ENCODE measurements at regions of chr9 and their contacts with region 1.

Region 1: GRCh38 chr9:37408933-37409710 is 13.4 kb upstream of the GRHPR start:
- DNase-seq: peak; percentile 95
- H3K4me3 Mint-ChIP-seq: no peak overlapping the region
- H3K27ac Mint-ChIP-seq: peak overlapping the region; percentile 78
- H3K4me1 Mint-ChIP-seq: peaks cover 43% of the 10 kb centered on the region
- H3K27me3 Mint-ChIP-seq: peaks cover 6% of the 10 kb centered on the region

Region 2: DNA sequence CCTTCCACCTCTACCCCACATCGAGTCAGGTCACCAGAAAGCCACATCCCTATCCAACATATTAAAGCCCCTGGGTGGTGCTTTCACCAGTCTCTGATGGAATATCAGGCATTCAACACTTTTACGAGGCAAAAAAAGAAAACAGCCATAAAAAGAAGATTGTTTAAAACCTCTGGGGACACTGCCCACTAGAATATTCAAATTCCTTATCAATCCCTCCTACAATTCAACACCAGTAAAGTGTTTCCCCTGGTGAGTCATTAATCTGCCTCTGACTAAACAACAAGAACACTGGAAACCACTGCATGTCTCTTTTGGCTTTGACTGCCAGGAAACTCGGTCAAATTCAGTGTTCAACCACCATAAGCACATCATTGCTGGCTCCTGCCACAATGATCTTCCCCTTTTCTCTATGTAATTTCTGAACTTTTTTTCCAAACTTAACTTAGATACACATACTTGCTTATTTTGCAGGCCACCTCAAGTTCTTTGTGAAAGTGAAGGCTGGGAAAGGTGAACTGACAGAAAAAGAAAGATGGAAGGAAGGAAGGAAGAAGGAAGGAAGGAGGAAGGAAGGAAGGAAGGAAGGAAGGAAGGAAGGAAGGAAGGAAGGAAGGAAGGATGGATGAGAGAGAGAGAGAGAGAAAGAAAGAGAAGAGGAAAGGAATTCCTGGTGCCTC is 480.3 kb before region 1 on chr9:
- CTCF ChIA-PET with region 1: no interaction called
- POLR2A ChIA-PET with region 1: no interaction called
- intact Hi-C with region 1: loop called (anchors 2 kb)
- DNase-seq: peak; percentile 65
- H3K4me3 Mint-ChIP-seq: no peak overlapping the region
- H3K27ac Mint-ChIP-seq: peak overlapping the region; percentile 82
- H3K4me1 Mint-ChIP-seq: peaks cover 28% of the 10 kb centered on the region
- H3K27me3 Mint-ChIP-seq: peaks cover 10% of the 10 kb centered on the region

Region 3: DNA sequence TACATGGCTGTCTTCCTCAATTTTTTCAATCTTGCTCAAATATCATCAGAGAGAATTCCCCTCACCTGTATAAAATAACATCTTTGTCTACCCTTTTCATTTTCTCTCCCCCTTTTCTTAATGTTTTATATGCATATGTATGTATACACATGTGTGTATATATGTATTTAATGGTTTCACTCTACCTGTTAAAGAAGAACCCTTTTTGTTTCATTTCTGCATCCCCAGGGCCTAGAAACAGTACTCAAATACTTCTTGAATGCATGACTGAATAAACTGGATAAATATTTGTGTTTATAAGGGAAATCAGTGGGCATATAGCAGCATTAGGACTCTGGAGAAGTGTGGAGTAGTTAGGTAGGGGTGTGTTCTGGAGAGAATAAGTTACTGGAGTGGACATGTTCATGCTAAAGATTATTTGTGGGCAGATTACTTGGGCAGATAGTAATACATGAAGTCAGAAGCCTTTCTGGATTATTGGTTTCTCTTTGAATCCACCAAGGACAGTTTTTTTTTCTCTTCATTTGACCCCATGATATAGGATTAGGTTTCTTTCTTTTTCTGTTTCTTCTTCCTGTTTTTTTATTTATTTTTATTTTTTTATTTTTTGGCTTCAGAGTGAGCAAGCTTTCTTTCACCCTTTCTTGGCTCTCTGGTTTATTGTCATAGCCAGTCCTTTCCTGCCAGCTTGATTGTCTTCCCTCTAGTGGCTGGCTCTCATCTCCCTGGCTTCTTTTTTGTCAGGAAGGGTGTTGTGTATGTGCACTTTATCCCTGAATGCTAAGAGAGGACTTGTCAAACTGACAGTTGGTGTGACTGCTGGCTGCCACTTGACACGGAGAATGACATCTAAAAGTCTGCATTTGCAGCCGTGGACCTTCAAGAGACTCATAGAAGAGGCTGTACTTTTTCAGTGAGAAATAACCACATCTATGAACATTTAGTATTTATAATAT is 199.4 kb before region 1 on chr9:
- CTCF ChIA-PET with region 1: no interaction called
- POLR2A ChIA-PET with region 1: no interaction called
- intact Hi-C with region 1: loop called (anchors 10 kb)
- DNase-seq: no peak
- H3K4me3 Mint-ChIP-seq: no peak overlapping the region
- H3K27ac Mint-ChIP-seq: no peak overlapping the region
- H3K4me1 Mint-ChIP-seq: peaks cover 35% of the 10 kb centered on the region
- H3K27me3 Mint-ChIP-seq: no peaks in the 10 kb centered on the region

Region 4: GRCh38 chr9:37465249-37466036 is 56.3 kb after region 1 on chr9 and contains the start of gene ZBTB5:
- CTCF ChIA-PET with region 1: interaction called, 6 read pairs
- POLR2A ChIA-PET with region 1: interaction called, 4 read pairs
- intact Hi-C with region 1: loop called (anchors 1 kb)
- DNase-seq: peak; percentile 99
- H3K4me3 Mint-ChIP-seq: peak within 1 kb of the TSS; percentile 97
- H3K27ac Mint-ChIP-seq: peak within 1 kb of the TSS; percentile 95
- H3K4me1 Mint-ChIP-seq: peaks cover 29% of the 10 kb centered on the region
- H3K27me3 Mint-ChIP-seq: no peaks in the 10 kb centered on the region
- total RNA-seq, gene ZBTB5: 8.3 to 9.3 TPM

Region 5: GRCh38 chr9:37528652-37529510 is 119.8 kb after region 1 on chr9:
- CTCF ChIA-PET with region 1: no interaction called
- POLR2A ChIA-PET with region 1: no interaction called
- intact Hi-C with region 1: loop called (anchors 1 kb)
- DNase-seq: peak; percentile 93
- H3K4me3 Mint-ChIP-seq: peak overlapping the region; percentile 71
- H3K27ac Mint-ChIP-seq: peak overlapping the region; percentile 94
- H3K4me1 Mint-ChIP-seq: peaks cover 42% of the 10 kb centered on the region
- H3K27me3 Mint-ChIP-seq: no peaks in the 10 kb centered on the region

Measured in activated CD4-positive, alpha-beta memory T cell treated with anti-CD3 and anti-CD28 coated beads for 36 hours (primary cell).